Aorta (tissue), 5 donors: ENCODE measurements at regions of chr17 and their contacts with region 1.

Region 1: GRCh38 chr17:28763804-28764266 is 20.0 kb downstream of the TRAF4 start:
- DNase-seq: peak; percentile 72 to 84
- ATAC-seq: peak; percentile 74
- H3K4me3 ChIP-seq: no peak overlapping the region
- H3K27ac ChIP-seq: no peak overlapping the region
- H3K4me1 ChIP-seq: no peaks in the 10 kb centered on the region
- H3K27me3 ChIP-seq: no peaks in the 10 kb centered on the region

Region 2: DNA sequence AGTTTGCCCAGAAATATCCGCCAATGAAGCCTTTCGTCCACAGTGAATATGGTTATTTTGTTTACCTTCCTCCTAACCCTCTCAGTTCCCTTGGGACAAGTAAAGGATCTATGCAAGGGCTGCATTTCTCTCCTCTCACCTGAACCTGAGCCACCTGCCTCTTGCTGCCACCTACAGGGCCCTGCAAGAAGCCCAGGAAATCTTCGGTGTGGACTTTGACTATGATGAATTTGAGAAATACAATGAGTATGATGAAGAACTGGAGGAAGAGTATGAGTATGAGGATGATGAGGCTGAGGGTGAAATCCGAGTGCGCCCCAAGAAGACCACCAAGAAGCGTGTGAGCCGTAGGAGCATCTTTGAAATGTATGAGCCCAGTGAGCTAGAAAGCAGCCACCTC is 87.9 kb before region 1 on chr17:
- intact Hi-C with region 1: no loop called
- DNase-seq: no peak
- ATAC-seq: no peak
- H3K4me3 ChIP-seq: no peak overlapping the region
- H3K27ac ChIP-seq: no peak overlapping the region
- H3K4me1 ChIP-seq: no peaks in the 10 kb centered on the region
- H3K27me3 ChIP-seq: no peaks in the 10 kb centered on the region

Region 3: GRCh38 chr17:28842282-28843012 is 78.6 kb after region 1 on chr17 and contains the start of gene FAM222B:
- intact Hi-C with region 1: loop called in 1 of 2 experiments (anchors 5 kb)
- DNase-seq: peak; percentile 91 to 94
- ATAC-seq: peak; percentile 98
- H3K4me3 ChIP-seq: peak within 1 kb of the TSS; percentile 40 to 72
- H3K27ac ChIP-seq: peak within 1 kb of the TSS in 1 of 2 donors; percentile 23
- H3K4me1 ChIP-seq: no peaks in the 10 kb centered on the region
- H3K27me3 ChIP-seq: no peaks in the 10 kb centered on the region
- total RNA-seq, gene FAM222B: 18.4 to 18.7 TPM

Region 4: DNA sequence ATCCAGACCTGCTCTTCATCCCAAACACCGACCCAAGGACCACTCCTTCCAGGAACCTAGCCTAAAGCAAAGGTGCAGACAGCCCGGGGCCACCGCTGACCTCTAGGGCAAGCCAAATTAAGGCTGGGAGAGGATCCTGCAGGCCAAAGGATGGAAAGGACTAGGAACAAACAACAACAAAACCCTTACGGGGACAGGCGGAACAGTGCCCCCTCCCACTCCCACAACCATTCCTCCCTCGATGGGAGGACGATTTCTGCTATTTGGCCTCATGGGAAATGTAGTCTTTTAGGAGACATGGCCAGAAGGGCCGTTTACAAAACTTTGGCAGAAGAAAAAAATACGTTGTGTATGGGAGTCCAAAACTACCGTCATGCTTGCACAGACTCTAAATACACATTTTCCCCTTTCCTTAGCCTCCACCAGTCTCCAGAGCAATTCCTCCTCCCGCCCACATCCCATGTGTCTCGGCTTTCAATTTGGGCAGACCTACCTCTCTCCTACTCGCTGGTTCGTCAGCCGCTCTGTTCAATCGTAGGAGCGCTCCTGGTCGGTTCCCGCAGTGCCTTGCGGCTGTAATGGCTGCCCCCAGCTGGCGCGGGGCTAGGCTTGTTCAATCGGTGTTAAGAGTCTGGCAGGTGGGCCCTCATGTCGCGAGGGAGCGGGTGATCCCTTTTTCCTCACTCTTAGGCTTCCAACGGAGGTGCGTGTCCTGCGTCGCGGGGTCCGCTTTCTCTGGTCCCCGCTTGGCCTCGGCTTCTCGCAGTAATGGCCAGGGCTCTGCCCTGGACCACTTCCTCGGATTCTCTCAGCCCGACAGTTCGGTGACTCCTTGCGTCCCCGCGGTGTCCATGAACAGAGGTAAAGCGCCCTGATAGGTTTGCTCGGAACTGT is 90.9 kb after region 1 on chr17 and contains the start of gene ERAL1:
- intact Hi-C with region 1: loop called in 1 of 2 experiments (anchors 10 kb)
- DNase-seq: peak; percentile 90 to 93
- ATAC-seq: peak; percentile 98
- H3K4me3 ChIP-seq: peak within 1 kb of the TSS; percentile 30 to 65
- H3K27ac ChIP-seq: peak within 1 kb of the TSS in 1 of 2 donors; percentile 55
- H3K4me1 ChIP-seq: no peaks in the 10 kb centered on the region
- H3K27me3 ChIP-seq: no peaks in the 10 kb centered on the region
- total RNA-seq, gene ERAL1: 17.1 to 20.0 TPM

Region 5: DNA sequence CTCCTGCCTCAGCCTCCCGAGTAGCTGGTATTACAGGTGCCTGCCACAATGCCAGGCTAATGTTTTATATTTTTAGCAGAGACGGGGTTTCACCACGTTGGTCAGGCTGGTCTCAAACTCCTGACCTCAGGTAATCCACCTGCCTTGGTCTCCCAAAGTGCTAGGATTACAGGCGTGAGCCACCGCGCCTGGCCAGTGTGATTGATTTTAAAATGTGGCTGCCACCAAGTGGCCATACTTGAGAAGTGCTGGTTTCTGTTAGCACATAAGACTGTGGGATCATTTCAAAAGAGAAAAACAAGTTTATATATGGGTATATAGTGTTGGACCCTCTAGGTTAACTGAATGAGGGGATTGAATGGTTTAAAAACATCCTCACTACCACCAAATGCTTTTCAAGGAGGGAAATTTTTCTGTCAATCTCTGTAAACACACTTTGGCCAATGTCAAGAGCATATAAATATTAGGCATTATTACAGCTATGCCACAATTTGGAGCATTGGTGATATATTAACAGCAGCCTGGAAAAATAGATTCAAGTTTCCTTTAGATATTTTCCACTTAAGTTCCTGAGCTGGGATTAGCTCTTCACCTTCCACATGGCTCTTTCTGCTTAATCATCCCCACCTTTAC is 152.6 kb after region 1 on chr17:
- intact Hi-C with region 1: loop called (anchors 5 kb)
- DNase-seq: no peak
- ATAC-seq: peak; percentile 65
- H3K4me3 ChIP-seq: no peak overlapping the region
- H3K27ac ChIP-seq: no peak overlapping the region
- H3K4me1 ChIP-seq: no peaks in the 10 kb centered on the region
- H3K27me3 ChIP-seq: no peaks in the 10 kb centered on the region